Dorsolateral prefrontal cortex (tissue), 120 donors: ENCODE measurements at regions of chr3 and their contacts with region 1.

Region 1: DNA sequence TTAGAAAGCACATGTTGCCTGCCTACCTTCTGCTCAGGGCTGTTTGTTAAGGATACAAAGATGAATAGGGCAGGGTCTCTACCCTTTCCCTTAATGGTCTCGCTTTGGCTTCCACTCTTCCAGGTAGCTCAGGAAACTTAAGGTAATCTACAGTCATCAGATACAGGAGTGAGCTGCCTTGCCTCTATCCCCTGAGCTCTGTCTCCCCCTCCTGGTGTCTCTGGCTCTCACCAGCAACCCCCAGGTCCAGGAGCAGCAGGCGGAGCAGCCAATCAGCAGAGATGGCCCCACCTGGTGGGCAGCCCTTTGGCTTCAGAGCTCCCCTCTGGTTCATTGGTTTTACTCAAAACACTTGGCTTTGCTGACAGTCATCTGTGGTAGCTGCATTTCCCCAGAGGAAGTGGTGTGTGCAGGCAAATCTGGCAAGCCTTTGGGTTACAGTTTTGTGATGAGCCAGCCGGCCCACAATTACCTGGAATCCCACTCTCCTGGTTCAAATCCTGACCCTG is 8.5 kb upstream of the CX3CR1 start:
- DNase-seq: peak; percentile 49 to 84 (median 78)
- H3K4me3 ChIP-seq: no peak overlapping the region
- H3K27ac ChIP-seq: no peak overlapping the region
- H3K27me3 ChIP-seq: no peaks in the 10 kb centered on the region
- CTCF ChIP-seq: peak in 55 of 56 donors; percentile 61 to 98 (median 89)

Region 2: DNA sequence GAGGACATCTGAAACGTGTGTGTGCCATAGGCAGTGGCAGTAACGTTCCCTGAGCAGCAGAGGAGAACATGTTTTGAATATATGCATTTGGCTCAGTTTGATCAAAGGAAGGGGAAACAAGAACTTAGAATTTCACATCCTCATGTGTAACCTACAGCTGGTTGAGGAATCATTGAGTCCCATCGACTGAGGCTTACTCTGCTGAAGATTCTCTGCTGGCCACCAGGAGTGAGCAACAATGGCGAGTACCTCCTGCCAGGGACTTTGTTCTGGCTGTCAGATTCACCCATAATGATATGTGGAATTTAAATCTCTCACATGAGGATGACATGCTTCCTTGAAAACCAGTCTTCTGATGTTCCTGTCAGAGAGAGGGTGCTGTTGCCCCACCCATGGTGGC is 202.2 kb before region 1 on chr3:
- intact Hi-C with region 1: no loop called
- DNase-seq: no peak
- H3K4me3 ChIP-seq: no peak overlapping the region
- H3K27ac ChIP-seq: no peak overlapping the region
- H3K27me3 ChIP-seq: no peaks in the 10 kb centered on the region
- CTCF ChIP-seq: no peak

Region 3: GRCh38 chr3:39126532-39127071 is 161.8 kb before region 1 on chr3:
- intact Hi-C with region 1: loop called (anchors 1 to 5 kb)
- DNase-seq: peak in 1 of 10 donors; percentile 62
- H3K4me3 ChIP-seq: no peak overlapping the region
- H3K27ac ChIP-seq: peak overlapping the region in 1 of 59 donors; percentile 5
- H3K27me3 ChIP-seq: no peaks in the 10 kb centered on the region
- CTCF ChIP-seq: peak in 55 of 56 donors; percentile 20 to 76 (median 58)

Region 4: DNA sequence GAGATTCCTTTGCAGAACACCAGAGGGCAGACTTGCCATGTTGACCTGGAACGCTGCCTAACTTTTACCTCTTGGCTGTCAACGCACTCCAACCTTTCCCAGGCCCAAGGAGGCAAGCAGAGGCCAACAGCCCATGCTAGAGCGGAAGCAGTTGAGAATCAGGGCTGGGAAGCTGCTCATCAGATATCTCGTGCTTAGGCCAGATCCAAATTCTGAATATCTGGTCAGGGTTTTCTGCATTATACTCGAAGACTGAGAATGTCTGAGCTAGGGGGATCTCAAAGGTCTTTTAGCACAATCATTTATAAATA is 98.4 kb before region 1 on chr3:
- intact Hi-C with region 1: loop called (anchors 5 kb)
- DNase-seq: peak in 5 of 10 donors; percentile 54 to 76 (median 59)
- H3K4me3 ChIP-seq: no peak overlapping the region
- H3K27ac ChIP-seq: peak overlapping the region in 2 of 59 donors; percentile 3 to 15
- H3K27me3 ChIP-seq: no peaks in the 10 kb centered on the region
- CTCF ChIP-seq: peak in 55 of 56 donors; percentile 54 to 87 (median 77)

Region 5: GRCh38 chr3:39208463-39209055 is 79.8 kb before region 1 on chr3:
- intact Hi-C with region 1: loop called (anchors 5 kb)
- DNase-seq: peak in 3 of 10 donors; percentile 43 to 64 (median 63)
- H3K4me3 ChIP-seq: no peak overlapping the region
- H3K27ac ChIP-seq: peak overlapping the region in 4 of 59 donors; percentile 5 to 41 (median 30)
- H3K27me3 ChIP-seq: no peaks in the 10 kb centered on the region
- CTCF ChIP-seq: peak in 55 of 56 donors; percentile 20 to 76 (median 59)